Heart left ventricle (tissue), 16 donors: ENCODE measurements at regions of chr6 and their contacts with region 1.

Region 1: GRCh38 chr6:21593412-21593926 is at the start of gene SOX4:
- DNase-seq: peak; percentile 93 to 97 (median 95)
- ATAC-seq: peak; percentile 77 to 90 (median 85)
- H3K4me3 ChIP-seq: peak within 1 kb of the TSS; percentile 49 to 93 (median 79)
- H3K27ac ChIP-seq: peak within 1 kb of the TSS; percentile 74 to 92 (median 90)
- H3K4me1 ChIP-seq: peaks cover 0 to 26% (median 14%) of the 10 kb centered on the region in 12 donors
- H3K27me3 ChIP-seq: no peaks in the 10 kb centered on the region
- CTCF ChIP-seq: no peak
- POLR2A ChIP-seq: peak in 1 of 2 donors; percentile 93
- total RNA-seq, gene SOX4: 1.9 to 20.3 (median 8.0) TPM

Region 2: DNA sequence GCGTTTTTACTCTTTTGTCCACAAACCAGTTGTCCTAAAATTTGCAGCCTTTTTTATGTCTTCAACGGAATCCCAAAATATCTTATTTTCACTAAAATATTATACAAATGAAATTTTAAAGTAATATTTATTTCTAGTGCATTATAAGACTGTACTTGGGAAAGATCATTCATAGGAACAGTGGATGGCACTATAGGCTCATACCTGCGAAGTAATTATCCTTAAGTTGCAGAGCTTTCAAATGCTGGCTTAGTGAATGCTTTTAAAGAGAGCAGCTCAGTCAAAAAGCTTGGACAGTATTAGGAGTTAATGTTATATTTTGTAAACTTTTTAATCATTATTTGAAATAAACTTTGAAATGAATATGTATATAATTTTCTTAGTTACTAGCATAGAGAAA is 804.3 kb before region 1 on chr6:
- intact Hi-C with region 1: loop called in 6 of 10 experiments (anchors 2 to 10 kb)
- DNase-seq: no peak
- ATAC-seq: peak in 1 of 4 donors; percentile 52
- H3K4me3 ChIP-seq: no peak overlapping the region
- H3K27ac ChIP-seq: no peak overlapping the region
- H3K4me1 ChIP-seq: peaks cover 0 to 17% (median 0%) of the 10 kb centered on the region in 12 donors
- H3K27me3 ChIP-seq: no peaks in the 10 kb centered on the region
- CTCF ChIP-seq: peak in 10 of 12 donors; percentile 17 to 50 (median 32)
- POLR2A ChIP-seq: no peak

Region 3: GRCh38 chr6:21208081-21208795 is 385.2 kb before region 1 on chr6:
- intact Hi-C with region 1: no loop called
- DNase-seq: no peak
- ATAC-seq: no peak
- H3K4me3 ChIP-seq: no peak overlapping the region
- H3K27ac ChIP-seq: no peak overlapping the region
- H3K4me1 ChIP-seq: no peaks in the 10 kb centered on the region
- H3K27me3 ChIP-seq: no peaks in the 10 kb centered on the region
- CTCF ChIP-seq: no peak
- POLR2A ChIP-seq: no peak

Region 4: DNA sequence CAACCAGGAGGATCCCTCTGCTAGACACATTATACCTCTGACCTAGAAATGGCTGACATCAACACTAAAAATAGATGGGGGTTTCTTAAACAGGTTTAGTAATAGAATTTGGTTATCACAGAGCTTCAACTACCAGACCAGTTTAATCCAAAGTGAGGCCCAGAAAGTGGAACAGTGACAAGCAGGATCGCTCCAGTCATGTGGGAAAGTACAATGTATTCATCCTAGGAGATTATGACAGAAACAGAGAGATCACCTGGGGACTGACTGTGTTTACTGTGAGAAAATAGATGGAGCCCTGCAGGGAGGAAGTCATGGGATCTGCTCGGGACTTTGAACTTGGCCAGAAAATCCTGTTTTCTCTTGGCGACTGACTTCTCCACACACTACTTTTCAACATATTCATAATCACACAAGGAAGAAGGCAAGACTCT is 238.6 kb before region 1 on chr6:
- intact Hi-C with region 1: loop called in 1 of 10 experiments (anchors 10 kb)
- DNase-seq: no peak
- ATAC-seq: peak in 1 of 4 donors; percentile 61
- H3K4me3 ChIP-seq: no peak overlapping the region
- H3K27ac ChIP-seq: no peak overlapping the region
- H3K4me1 ChIP-seq: peaks cover 0 to 4% (median 0%) of the 10 kb centered on the region in 12 donors
- H3K27me3 ChIP-seq: no peaks in the 10 kb centered on the region
- CTCF ChIP-seq: no peak
- POLR2A ChIP-seq: no peak

Region 5: DNA sequence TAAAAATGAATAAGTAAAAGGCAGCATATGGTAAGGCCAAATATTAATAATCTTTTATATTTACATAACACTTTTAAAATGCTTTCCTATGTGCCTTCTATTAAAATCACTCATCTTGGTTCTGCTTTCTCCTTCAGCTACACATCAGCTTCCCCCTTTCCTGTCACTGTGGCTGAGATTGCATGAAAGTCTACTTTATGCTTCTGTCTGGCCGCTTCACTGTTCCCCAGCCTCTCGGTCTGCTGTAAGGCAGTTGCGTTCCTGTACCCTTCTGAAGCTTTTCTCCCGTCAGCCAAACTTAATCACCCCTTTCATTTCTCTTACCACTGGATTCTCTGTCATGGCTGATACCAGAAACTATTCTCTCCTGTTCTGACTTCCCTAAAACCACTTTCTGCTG is 34.7 kb after region 1 on chr6:
- intact Hi-C with region 1: no loop called
- DNase-seq: no peak
- ATAC-seq: no peak
- H3K4me3 ChIP-seq: no peak overlapping the region
- H3K27ac ChIP-seq: no peak overlapping the region
- H3K4me1 ChIP-seq: no peaks in the 10 kb centered on the region
- H3K27me3 ChIP-seq: no peaks in the 10 kb centered on the region
- CTCF ChIP-seq: no peak
- POLR2A ChIP-seq: no peak

Region 6: DNA sequence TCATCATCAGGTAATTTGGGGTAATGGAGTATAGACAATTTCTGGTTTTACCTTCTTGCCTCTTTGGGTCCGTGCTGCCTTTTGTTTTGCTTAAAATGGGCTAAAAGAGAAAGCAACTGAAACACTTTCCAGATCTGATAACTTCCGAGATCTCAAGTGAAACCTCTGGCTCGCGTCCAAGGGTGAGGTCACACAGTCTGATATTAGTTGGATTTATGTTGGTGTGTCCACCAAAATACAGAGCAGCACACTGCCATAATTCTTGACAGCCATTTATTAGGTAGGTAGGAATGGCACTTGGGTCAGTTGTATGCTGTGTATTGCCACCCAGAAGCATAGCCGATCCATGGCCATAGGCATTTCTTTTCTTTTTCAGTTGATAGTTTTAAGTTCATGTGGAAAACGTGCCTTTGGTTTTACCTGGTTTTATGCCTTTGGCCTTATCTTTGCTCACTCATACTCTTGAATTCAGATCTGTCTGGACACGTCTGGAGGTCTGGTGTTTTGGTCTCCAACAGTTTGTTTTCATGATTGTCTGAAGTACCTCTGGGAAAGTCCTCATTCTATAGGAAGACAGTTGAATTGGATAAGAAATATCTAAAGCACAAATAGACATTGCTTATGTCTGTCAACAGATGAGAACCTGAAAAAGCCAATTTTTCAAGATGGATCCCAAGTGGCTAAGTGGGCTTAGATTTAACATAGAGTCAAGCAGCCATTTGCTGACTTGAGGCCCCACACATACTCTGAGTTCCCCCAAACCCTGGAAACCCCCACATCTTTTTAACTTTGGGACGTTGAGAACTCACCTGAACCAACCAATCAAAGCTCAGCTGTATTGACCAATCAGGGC is 320.9 kb after region 1 on chr6:
- intact Hi-C with region 1: loop called in 1 of 10 experiments (anchors 10 kb)
- DNase-seq: peak; percentile 65 to 78 (median 75)
- ATAC-seq: peak in 1 of 4 donors; percentile 65
- H3K4me3 ChIP-seq: peak overlapping the region in 6 of 12 donors; percentile 4 to 35 (median 12)
- H3K27ac ChIP-seq: peak overlapping the region in 1 of 12 donors; percentile 7
- H3K4me1 ChIP-seq: peaks cover 0 to 27% (median 1%) of the 10 kb centered on the region in 12 donors
- H3K27me3 ChIP-seq: no peaks in the 10 kb centered on the region
- CTCF ChIP-seq: no peak
- POLR2A ChIP-seq: no peak

Region 7: GRCh38 chr6:22071270-22072041 is 478.0 kb after region 1 on chr6:
- intact Hi-C with region 1: loop called in 2 of 10 experiments (anchors 10 kb)
- DNase-seq: peak in 4 of 5 donors; percentile 57 to 75 (median 59)
- ATAC-seq: peak; percentile 79 to 94 (median 86)
- H3K4me3 ChIP-seq: peak overlapping the region in 9 of 12 donors; percentile 1 to 51 (median 24)
- H3K27ac ChIP-seq: peak overlapping the region; percentile 29 to 82 (median 66)
- H3K4me1 ChIP-seq: peaks cover 0 to 48% (median 19%) of the 10 kb centered on the region in 12 donors
- H3K27me3 ChIP-seq: no peaks in the 10 kb centered on the region
- CTCF ChIP-seq: no peak
- POLR2A ChIP-seq: no peak

Region 8: GRCh38 chr6:22737331-22737730 is 1143.9 kb after region 1 on chr6:
- intact Hi-C with region 1: loop called in 4 of 10 experiments (anchors 5 to 10 kb)
- DNase-seq: peak in 3 of 5 donors; percentile 13 to 57 (median 28)
- ATAC-seq: peak in 2 of 4 donors; percentile 32 to 73
- H3K4me3 ChIP-seq: no peak overlapping the region
- H3K27ac ChIP-seq: no peak overlapping the region
- H3K4me1 ChIP-seq: peaks cover 0 to 6% (median 0%) of the 10 kb centered on the region in 12 donors
- H3K27me3 ChIP-seq: no peaks in the 10 kb centered on the region
- CTCF ChIP-seq: peak; percentile 35 to 77 (median 56)
- POLR2A ChIP-seq: no peak

Region 9: DNA sequence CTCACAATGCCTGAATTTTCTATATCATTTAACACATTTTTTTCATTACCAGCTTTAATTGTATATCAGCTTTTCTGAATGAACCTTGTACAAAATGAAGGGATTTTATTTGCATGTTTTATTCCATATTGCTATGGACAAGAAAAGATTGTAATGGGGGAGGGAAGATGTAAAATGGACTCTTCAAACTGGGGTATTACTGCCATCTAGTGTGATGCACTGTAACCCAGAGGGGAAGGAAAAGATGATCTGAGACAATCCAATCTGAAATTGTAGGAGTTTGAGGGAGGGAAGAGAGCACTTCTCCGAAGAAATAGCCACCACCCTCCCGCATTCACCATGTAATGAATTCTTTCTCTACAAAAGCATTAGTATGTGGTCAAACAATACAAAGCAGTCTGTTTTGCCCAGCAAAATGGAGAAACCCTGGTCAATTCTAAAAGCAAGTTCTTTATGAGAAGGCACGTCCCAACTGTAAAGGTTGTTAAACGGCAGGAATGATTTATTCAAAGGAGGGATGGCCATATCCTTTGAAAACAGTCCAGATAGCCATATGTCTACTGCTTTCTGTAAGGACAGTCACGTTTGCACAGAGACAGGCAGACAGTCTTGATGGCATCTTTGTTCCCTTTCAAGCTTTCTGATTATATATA is 1853.1 kb after region 1 on chr6:
- intact Hi-C with region 1: loop called in 7 of 10 experiments (anchors 5 to 10 kb)
- DNase-seq: no peak
- ATAC-seq: peak; percentile 61 to 89 (median 81)
- H3K4me3 ChIP-seq: no peak overlapping the region
- H3K27ac ChIP-seq: peak overlapping the region in 6 of 12 donors; percentile 2 to 66 (median 22)
- H3K4me1 ChIP-seq: peaks cover 0 to 21% (median 14%) of the 10 kb centered on the region in 12 donors
- H3K27me3 ChIP-seq: no peaks in the 10 kb centered on the region
- CTCF ChIP-seq: peak; percentile 30 to 70 (median 58)
- POLR2A ChIP-seq: no peak